ENCODE measurements at regions of chr2 and their contacts with region 1.

Region 1: DNA sequence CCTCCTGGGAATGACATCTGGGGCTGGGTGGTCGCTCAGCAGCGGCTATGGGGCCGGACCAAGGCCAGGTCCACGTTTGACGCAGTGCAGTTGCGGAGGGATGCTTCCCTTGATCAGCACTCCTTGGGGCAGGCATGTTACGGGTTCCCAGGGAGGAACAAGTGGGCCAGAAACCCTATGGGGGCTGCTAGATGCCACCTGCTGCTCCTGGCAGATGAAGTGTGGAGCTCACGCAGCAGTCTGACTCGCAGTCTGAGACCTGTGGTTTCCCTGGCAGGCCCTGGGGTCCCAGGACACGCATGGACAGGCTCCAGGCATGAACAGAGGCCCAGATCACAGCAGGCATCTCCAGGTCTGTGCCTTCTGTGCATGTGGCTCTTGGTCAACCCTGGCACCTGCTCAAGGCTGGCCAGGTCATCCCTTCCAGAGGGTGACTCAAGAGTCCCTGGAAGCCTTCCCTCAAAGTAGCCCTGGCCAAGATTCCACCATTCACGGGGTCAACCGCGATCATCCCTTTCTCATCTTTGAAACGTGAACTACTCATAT is 20.0 kb downstream of the KCNF1 start:
- DNase-seq: peak; percentile 90 to 95
- ATAC-seq: peak; percentile 98 to 99
- H3K4me3 ChIP-seq: no peak overlapping the region
- H3K27ac ChIP-seq: peak overlapping the region; percentile 57 to 82 (median 76)
- H3K4me1 ChIP-seq: peaks cover 8 to 16% of the 10 kb centered on the region in 2 donors
- H3K27me3 ChIP-seq: no peaks in the 10 kb centered on the region
- CTCF ChIP-seq: peak in 1 of 5 experiments; percentile 12
- POLR2A ChIP-seq: no peak

Region 2: GRCh38 chr2:10591207-10591606 is 340.6 kb before region 1 on chr2:
- in situ Hi-C with region 1: no loop called
- intact Hi-C with region 1: no loop called
- DNase-seq: no peak
- ATAC-seq: no peak
- H3K4me3 ChIP-seq: no peak overlapping the region
- H3K27ac ChIP-seq: no peak overlapping the region
- H3K4me1 ChIP-seq: no peaks in the 10 kb centered on the region
- H3K27me3 ChIP-seq: no peaks in the 10 kb centered on the region
- CTCF ChIP-seq: no peak
- POLR2A ChIP-seq: no peak

Region 3: GRCh38 chr2:10873790-10874437 is 57.9 kb before region 1 on chr2:
- in situ Hi-C with region 1: no loop called
- intact Hi-C with region 1: loop called (anchors 5 kb)
- DNase-seq: peak in 1 of 2 donors; percentile 32
- ATAC-seq: peak in 1 of 2 donors; percentile 52
- H3K4me3 ChIP-seq: no peak overlapping the region
- H3K27ac ChIP-seq: peak overlapping the region in 3 of 4 donors; percentile 35 to 64 (median 50)
- H3K4me1 ChIP-seq: peaks cover 20 to 32% of the 10 kb centered on the region in 2 donors
- H3K27me3 ChIP-seq: no peaks in the 10 kb centered on the region
- CTCF ChIP-seq: no peak
- POLR2A ChIP-seq: no peak

Region 4: DNA sequence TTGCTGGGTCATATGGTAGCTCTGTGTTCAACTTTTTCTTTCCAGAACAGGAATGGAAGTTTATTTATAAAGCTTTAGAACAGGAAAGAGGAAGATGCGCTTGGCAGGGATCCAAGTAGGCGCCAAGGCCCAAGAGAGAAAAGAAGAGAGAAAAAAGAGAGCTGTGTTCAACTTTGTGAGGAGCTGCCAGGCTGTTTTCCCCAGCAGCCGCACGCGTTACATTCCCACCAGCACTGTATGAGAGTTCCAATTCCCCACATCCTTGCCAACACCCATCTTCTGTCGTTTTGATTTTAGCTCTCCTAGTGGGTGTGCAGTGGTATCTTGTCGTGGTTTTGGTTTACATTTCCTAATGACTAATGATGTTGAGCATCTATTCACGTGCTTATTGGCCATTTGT is 31.4 kb after region 1 on chr2:
- in situ Hi-C with region 1: no loop called
- intact Hi-C with region 1: loop called (anchors 2 kb)
- DNase-seq: no peak
- ATAC-seq: no peak
- H3K4me3 ChIP-seq: no peak overlapping the region
- H3K27ac ChIP-seq: no peak overlapping the region
- H3K4me1 ChIP-seq: peaks cover 3 to 6% of the 10 kb centered on the region in 2 donors
- H3K27me3 ChIP-seq: peaks cover 0 to 8% (median 0%) of the 10 kb centered on the region in 3 donors
- CTCF ChIP-seq: no peak
- POLR2A ChIP-seq: no peak

Region 5: DNA sequence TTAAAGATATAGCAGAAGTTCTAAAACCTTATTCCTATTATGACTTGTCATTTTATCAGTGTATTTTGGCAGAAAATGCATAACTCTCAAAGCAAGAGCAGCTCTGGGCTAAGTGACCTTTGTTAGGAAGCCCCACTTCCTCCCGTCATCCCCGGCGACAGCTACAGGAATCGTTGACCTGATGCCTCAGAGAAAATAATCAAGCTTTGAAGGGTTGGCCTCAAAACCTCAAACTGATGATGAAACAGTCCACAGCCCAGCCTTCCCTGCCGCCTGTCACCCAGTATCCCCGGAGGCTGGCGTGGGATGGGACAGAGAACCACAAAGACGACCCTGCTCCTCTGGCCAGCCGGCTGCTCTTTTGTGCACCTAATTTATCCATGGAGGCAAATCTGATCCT is 45.2 kb after region 1 on chr2:
- in situ Hi-C with region 1: no loop called
- intact Hi-C with region 1: no loop called
- DNase-seq: no peak
- ATAC-seq: no peak
- H3K4me3 ChIP-seq: no peak overlapping the region
- H3K27ac ChIP-seq: no peak overlapping the region
- H3K4me1 ChIP-seq: no peaks in the 10 kb centered on the region
- H3K27me3 ChIP-seq: peaks cover 6 to 15% (median 10%) of the 10 kb centered on the region in 3 donors
- CTCF ChIP-seq: no peak
- POLR2A ChIP-seq: no peak